ENCODE measurements at regions of chr4 and their contacts with region 1.

Region 1: GRCh38 chr4:39044364-39044955 is 12.3 kb upstream of the TMEM156 start:
- DNase-seq: peak; percentile 81 to 95
- ATAC-seq: peak; percentile 75 to 84
- H3K4me3 ChIP-seq: peak overlapping the region; percentile 66
- H3K27ac ChIP-seq: peak overlapping the region; percentile 93 to 100
- H3K4me1 ChIP-seq: peaks cover 41% of the 10 kb centered on the region
- CTCF ChIP-seq: no peak
- EP300 ChIP-seq: no peak
- POLR2A ChIP-seq: no peak
- RAD21 ChIP-seq: peak in 1 of 2 experiments; percentile 20; a peak in 1 of 5 replicates

Region 2: DNA sequence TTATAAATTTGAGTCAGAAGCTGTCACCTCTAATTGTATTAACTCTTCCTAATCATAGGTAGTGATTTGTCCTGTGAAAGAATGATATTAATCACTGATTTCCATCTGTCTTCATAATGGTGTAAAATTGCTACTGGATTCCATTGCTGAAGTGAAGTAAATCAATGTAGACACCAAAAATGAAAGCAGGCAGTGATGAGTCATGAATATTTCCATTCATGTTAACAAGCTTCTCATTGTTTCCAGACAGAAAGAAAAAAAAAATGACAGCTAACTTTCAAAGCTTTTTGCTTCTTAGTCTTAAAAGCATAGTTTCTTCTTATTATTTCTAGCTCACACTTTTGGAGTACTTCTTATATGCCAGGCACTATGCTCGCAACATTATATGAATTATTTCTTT is 155.3 kb before region 1 on chr4:
- CTCF ChIA-PET with region 1: no interaction called
- POLR2A ChIA-PET with region 1: no interaction called
- DNase-seq: peak in 1 of 2 experiments; percentile 16
- ATAC-seq: no peak
- H3K4me3 ChIP-seq: no peak overlapping the region
- H3K27ac ChIP-seq: peak overlapping the region in 1 of 2 experiments; percentile 57; a peak in 2 of 6 replicates
- H3K4me1 ChIP-seq: peaks cover 22% of the 10 kb centered on the region; the same call in 2 of the 3 replicates
- CTCF ChIP-seq: no peak
- EP300 ChIP-seq: no peak
- POLR2A ChIP-seq: no peak
- RAD21 ChIP-seq: no peak

Region 3: GRCh38 chr4:39014028-39014427 is 30.4 kb before region 1 on chr4:
- CTCF ChIA-PET with region 1: no interaction called
- POLR2A ChIA-PET with region 1: no interaction called
- DNase-seq: no peak
- ATAC-seq: no peak
- H3K4me3 ChIP-seq: no peak overlapping the region
- H3K27ac ChIP-seq: no peak overlapping the region
- H3K4me1 ChIP-seq: no peaks in the 10 kb centered on the region
- CTCF ChIP-seq: no peak
- EP300 ChIP-seq: no peak
- POLR2A ChIP-seq: no peak
- RAD21 ChIP-seq: no peak

Region 4: DNA sequence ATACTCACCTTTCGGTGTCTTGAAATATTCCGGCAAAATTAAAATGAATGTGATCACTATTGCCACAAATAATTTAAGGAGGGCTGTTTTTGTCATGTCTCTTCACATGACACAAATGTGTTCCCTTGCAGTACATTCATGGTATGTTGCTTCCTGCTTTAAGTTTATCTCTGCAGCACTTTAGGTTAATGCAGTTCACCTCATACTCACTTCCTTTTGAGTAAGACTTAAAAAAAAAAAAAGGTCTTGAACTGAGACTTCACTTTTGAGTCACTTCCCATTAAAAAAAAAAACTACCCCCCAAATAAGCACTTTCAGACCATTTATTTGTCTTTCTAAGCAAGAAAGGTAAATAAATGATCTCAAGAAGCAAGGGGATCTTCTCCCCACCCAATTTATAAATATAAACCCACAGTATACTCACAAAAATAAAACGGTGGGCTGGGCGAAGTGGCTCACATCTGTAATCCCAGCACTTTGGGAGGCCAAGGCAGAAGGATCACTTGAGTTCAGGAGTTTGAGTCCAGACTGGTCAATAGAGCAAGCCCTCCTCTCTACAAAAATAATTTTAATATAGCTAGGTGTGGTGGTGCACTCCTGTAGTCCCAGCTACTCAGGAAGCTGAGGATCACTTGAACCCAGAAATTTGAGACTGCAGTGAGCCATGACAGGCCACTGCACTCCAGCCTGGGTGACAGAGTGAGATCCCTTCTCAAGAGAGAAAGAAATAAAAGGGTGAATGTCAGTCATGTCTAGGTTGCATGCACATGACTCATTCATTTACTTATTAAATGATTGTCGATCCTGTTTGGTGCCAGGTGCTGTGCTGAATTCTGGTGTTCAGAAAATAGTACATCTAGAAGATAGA is 12.0 kb before region 1 on chr4 and contains the start of gene TMEM156:
- CTCF ChIA-PET with region 1: interaction called, 5 read pairs
- POLR2A ChIA-PET with region 1: interaction called, 55 read pairs
- DNase-seq: peak in 1 of 2 experiments; percentile 78
- ATAC-seq: peak in 1 of 2 experiments; percentile 45; a peak in 3 of 6 replicates
- H3K4me3 ChIP-seq: peak within 1 kb of the TSS; percentile 40
- H3K27ac ChIP-seq: peak within 1 kb of the TSS; percentile 87 to 93
- H3K4me1 ChIP-seq: peaks cover 57% of the 10 kb centered on the region
- CTCF ChIP-seq: no peak
- EP300 ChIP-seq: no peak; a peak in 1 of 5 replicates
- POLR2A ChIP-seq: no peak
- RAD21 ChIP-seq: 0 out of 5 replicates have a peak, but pooled peaks of 1 of the 2 experiments have one; percentile 16
- polyA plus RNA-seq, gene TMEM156: 38.5 and 45.1 TPM in 2 replicates